Endothelial cell of umbilical vein (primary cell): ENCODE measurements at regions of chr16 and their contacts with region 1.

Region 1: GRCh38 chr16:77171745-77172635 is 19.0 kb upstream of the MON1B start:
- DNase-seq: peak; percentile 76
- H3K4me3 ChIP-seq: peak overlapping the region in 1 of 3 experiments; percentile 12
- H3K27ac ChIP-seq: peak overlapping the region; percentile 36
- H3K4me1 ChIP-seq: peaks cover 17% of the 10 kb centered on the region
- H3K27me3 ChIP-seq: peaks cover 2 to 11% of the 10 kb centered on the region in 2 experiments
- CTCF ChIP-seq: peak; percentile 52 to 59
- POLR2A ChIP-seq: no peak

Region 2: GRCh38 chr16:75471723-75472633 is 1700.0 kb before region 1 on chr16:
- CTCF ChIA-PET with region 1: interaction called, 11 read pairs
- POLR2A ChIA-PET with region 1: no interaction called
- dilution Hi-C with region 1: no loop called
- intact Hi-C with region 1: loop called (anchors 5 kb)
- DNase-seq: peak; percentile 67
- H3K4me3 ChIP-seq: no peak overlapping the region
- H3K27ac ChIP-seq: no peak overlapping the region
- H3K4me1 ChIP-seq: no peaks in the 10 kb centered on the region
- H3K27me3 ChIP-seq: no peaks in the 10 kb centered on the region
- CTCF ChIP-seq: peak; percentile 65 to 74
- POLR2A ChIP-seq: no peak

Region 3: GRCh38 chr16:75789237-75789636 is 1382.8 kb before region 1 on chr16:
- CTCF ChIA-PET with region 1: interaction called, 73 read pairs
- POLR2A ChIA-PET with region 1: no interaction called
- dilution Hi-C with region 1: no loop called
- intact Hi-C with region 1: loop called (anchors 1 kb)
- DNase-seq: peak; percentile 46
- H3K4me3 ChIP-seq: no peak overlapping the region
- H3K27ac ChIP-seq: no peak overlapping the region
- H3K4me1 ChIP-seq: no peaks in the 10 kb centered on the region
- H3K27me3 ChIP-seq: peaks cover 0 to 2% of the 10 kb centered on the region in 2 experiments
- CTCF ChIP-seq: peak; percentile 50 to 54
- POLR2A ChIP-seq: no peak

Region 4: GRCh38 chr16:75801307-75801706 is 1370.7 kb before region 1 on chr16:
- CTCF ChIA-PET with region 1: interaction called, 85 read pairs
- POLR2A ChIA-PET with region 1: no interaction called
- dilution Hi-C with region 1: no loop called
- intact Hi-C with region 1: no loop called
- DNase-seq: no peak
- H3K4me3 ChIP-seq: no peak overlapping the region
- H3K27ac ChIP-seq: no peak overlapping the region
- H3K4me1 ChIP-seq: no peaks in the 10 kb centered on the region
- H3K27me3 ChIP-seq: no peaks in the 10 kb centered on the region
- CTCF ChIP-seq: no peak
- POLR2A ChIP-seq: no peak

Region 5: DNA sequence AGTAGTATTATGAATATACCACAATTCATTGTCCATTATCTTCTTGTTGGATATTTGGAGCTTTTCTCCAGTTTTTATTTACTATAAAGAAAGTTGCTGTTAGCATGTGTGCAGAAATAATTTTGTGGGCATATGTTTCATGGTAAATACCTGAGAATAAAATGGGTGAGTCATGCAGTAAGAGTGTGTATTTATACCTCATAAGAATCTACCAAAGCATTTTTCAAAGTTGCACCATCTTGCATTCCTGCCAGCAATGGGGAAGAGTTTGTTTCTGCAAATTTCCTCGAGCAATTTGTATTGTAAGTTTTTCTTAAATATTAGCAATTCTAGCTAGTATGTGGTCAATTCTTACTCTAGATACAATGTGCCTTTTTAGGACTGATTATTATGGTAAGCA is 11.1 kb after region 1 on chr16:
- CTCF ChIA-PET with region 1: interaction called, 21 read pairs
- POLR2A ChIA-PET with region 1: no interaction called
- dilution Hi-C with region 1: no loop called
- intact Hi-C with region 1: no loop called
- DNase-seq: no peak
- H3K4me3 ChIP-seq: no peak overlapping the region
- H3K27ac ChIP-seq: no peak overlapping the region
- H3K4me1 ChIP-seq: no peaks in the 10 kb centered on the region
- H3K27me3 ChIP-seq: peaks cover 1 to 9% of the 10 kb centered on the region in 2 experiments
- CTCF ChIP-seq: no peak
- POLR2A ChIP-seq: no peak